ENCODE measurements at regions of chr16 and their contacts with region 1.

Region 1: GRCh38 chr16:49876716-49877129 is 20.8 kb upstream of the ZNF423 start:
- DNase-seq: peak; percentile 96

Region 2: DNA sequence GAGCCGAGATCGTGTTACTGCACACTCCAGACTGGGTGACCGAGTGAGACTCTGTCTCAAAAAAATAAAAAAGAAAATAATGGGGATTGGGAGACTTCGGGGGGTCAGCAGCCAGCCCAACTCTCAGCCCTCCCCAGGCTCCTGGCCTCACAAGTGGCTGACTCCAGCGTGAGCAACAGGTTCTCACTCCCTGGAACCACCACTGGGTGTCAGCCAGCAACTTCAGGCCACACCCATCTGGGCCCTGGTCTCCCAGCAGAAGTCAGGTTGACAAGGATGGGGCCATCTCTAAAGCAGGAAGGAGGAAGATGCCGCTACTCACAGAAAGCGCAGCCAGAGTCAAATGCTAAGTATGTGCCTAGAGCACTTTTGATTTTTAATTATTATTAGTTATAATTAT is 363.7 kb before region 1 on chr16:
- CTCF ChIA-PET with region 1: no interaction called
- POLR2A ChIA-PET with region 1: no interaction called
- DNase-seq: peak; percentile 50

Region 3: GRCh38 chr16:49890876-49891275 is 14.2 kb after region 1 on chr16:
- CTCF ChIA-PET with region 1: interaction called, 13 read pairs
- POLR2A ChIA-PET with region 1: interaction called, 5 read pairs
- DNase-seq: peak; percentile 30

Region 4: GRCh38 chr16:49918257-49918656 is 41.5 kb after region 1 on chr16:
- CTCF ChIA-PET with region 1: no interaction called
- POLR2A ChIA-PET with region 1: no interaction called
- DNase-seq: no peak

Measured in HEK293T (cell line).